ENCODE measurements at regions of chr14 and their contacts with region 1.

Region 1: GRCh38 chr14:24108336-24108874 is 6.2 kb upstream of the DCAF11 start:
- DNase-seq: no peak
- ATAC-seq: no peak
- H3K4me3 ChIP-seq: no peak overlapping the region
- H3K27ac ChIP-seq: no peak overlapping the region
- H3K4me1 ChIP-seq: peaks cover 9% of the 10 kb centered on the region
- H3K27me3 ChIP-seq: no peaks in the 10 kb centered on the region
- CTCF ChIP-seq: no peak

Region 2: GRCh38 chr14:24013654-24014514 is 94.5 kb before region 1 on chr14:
- intact Hi-C with region 1: loop called in 1 of 2 experiments (anchors 5 kb)
- DNase-seq: no peak
- ATAC-seq: peak; percentile 84 to 93 (median 92)
- H3K4me3 ChIP-seq: peak overlapping the region; percentile 4
- H3K27ac ChIP-seq: no peak overlapping the region
- H3K4me1 ChIP-seq: peaks cover 4% of the 10 kb centered on the region
- H3K27me3 ChIP-seq: no peaks in the 10 kb centered on the region
- CTCF ChIP-seq: peak; percentile 91

Region 3: DNA sequence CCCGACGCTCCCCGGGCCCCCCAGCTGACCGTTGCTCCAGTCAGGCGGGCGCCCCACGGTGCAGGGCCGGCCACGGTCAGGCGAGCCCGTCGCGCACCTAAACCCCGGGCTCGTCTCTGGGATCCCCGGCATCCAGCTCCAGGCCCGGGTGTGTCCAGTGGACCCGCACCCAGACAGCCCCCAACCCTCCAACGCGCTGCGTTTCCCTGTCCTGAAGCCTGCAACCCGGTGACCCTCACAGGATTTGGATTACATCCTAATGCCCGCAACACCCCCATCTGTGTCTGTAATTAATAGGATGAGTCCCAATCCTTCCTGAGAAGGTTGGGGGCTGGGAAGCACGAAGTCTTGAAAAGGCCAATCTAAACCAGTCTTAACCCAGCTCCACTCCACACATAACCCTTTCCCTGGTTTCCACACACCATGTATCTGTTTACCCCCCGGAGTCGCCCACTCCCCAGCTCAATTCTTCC is 26.6 kb before region 1 on chr14:
- intact Hi-C with region 1: no loop called
- DNase-seq: peak in 1 of 2 donors; percentile 44
- ATAC-seq: peak in 1 of 4 donors; percentile 3
- H3K4me3 ChIP-seq: peak overlapping the region; percentile 77
- H3K27ac ChIP-seq: no peak overlapping the region
- H3K4me1 ChIP-seq: peaks cover 5% of the 10 kb centered on the region
- H3K27me3 ChIP-seq: no peaks in the 10 kb centered on the region
- CTCF ChIP-seq: no peak

Region 4: GRCh38 chr14:24093901-24094761 is 14.3 kb before region 1 on chr14 and contains the start of gene PCK2:
- intact Hi-C with region 1: loop called in 1 of 2 experiments (anchors 2 kb)
- DNase-seq: peak; percentile 94 to 96
- ATAC-seq: peak; percentile 87 to 92 (median 88)
- H3K4me3 ChIP-seq: peak within 1 kb of the TSS; percentile 80
- H3K27ac ChIP-seq: peak within 1 kb of the TSS; percentile 75
- H3K4me1 ChIP-seq: peaks cover 6% of the 10 kb centered on the region
- H3K27me3 ChIP-seq: no peaks in the 10 kb centered on the region
- CTCF ChIP-seq: no peak
- total RNA-seq, gene PCK2: 2.1 to 4.5 (median 2.7) TPM

Region 5: GRCh38 chr14:24160850-24161804 is 52.7 kb after region 1 on chr14 and contains the start of gene IRF9:
- intact Hi-C with region 1: loop called in 1 of 2 experiments (anchors 2 kb)
- DNase-seq: peak; percentile 95 to 97
- ATAC-seq: peak; percentile 90 to 93 (median 91)
- H3K4me3 ChIP-seq: peak within 1 kb of the TSS; percentile 74
- H3K27ac ChIP-seq: peak within 1 kb of the TSS; percentile 86
- H3K4me1 ChIP-seq: peaks cover 19% of the 10 kb centered on the region
- H3K27me3 ChIP-seq: no peaks in the 10 kb centered on the region
- CTCF ChIP-seq: peak; percentile 96
- total RNA-seq, gene IRF9: 10.4 to 21.6 (median 15.1) TPM

Region 6: GRCh38 chr14:24848102-24848820 is 739.9 kb after region 1 on chr14:
- intact Hi-C with region 1: no loop called
- DNase-seq: no peak
- ATAC-seq: no peak
- H3K4me3 ChIP-seq: no peak overlapping the region
- H3K27ac ChIP-seq: no peak overlapping the region
- H3K4me1 ChIP-seq: no peaks in the 10 kb centered on the region
- H3K27me3 ChIP-seq: no peaks in the 10 kb centered on the region
- CTCF ChIP-seq: no peak